ENCODE measurements at regions of chr22 and their contacts with region 1.

Region 1: DNA sequence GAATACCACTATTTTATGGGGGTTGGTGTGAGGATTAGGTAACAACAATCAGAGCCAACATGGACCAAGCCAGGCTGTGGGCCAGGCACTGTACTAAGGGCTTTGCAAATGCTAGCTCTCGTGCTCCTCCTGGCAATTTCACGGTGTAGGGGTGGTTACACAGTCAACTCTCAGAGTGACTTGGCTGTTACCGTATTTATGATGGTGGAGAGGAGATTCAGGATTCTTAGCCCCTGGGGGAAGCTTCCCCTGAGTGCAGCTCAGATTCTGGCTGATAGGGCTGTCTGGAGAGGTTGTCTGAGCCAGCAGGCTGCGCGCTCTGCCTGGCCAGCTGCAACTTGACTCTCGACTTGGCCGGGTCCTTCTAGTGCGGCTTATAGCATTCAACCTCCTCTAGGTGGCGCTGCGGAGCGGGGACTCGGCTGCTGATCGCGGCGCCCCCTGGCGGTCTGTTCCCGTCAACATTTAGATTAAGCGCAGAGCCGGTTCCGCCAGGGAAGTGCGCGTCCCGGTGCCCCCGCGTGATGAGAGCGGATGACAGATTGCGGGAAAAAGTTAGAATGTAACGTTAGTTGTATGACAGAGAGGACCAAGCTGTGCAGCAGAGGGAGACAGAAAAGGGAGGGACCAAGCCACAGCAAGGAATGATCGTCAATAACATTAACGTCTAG is 4.5 kb upstream of the NCF4 start:
- DNase-seq: peak; percentile 78 to 99
- H3K4me3 ChIP-seq: no peak overlapping the region
- H3K27ac ChIP-seq: no peak overlapping the region
- H3K4me1 ChIP-seq: peaks cover 0 to 3% (median under 1%) of the 10 kb centered on the region in 4 experiments; a peak in 2 of 7 replicates
- H3K27me3 ChIP-seq: peaks cover 1 to 16% (median 10%) of the 10 kb centered on the region in 4 experiments
- CTCF ChIP-seq: peak; percentile 97 to 100 (median 100)
- EP300 ChIP-seq: no peak
- POLR2A ChIP-seq: no peak
- RAD21 ChIP-seq: peak; percentile 81 to 91

Region 2: DNA sequence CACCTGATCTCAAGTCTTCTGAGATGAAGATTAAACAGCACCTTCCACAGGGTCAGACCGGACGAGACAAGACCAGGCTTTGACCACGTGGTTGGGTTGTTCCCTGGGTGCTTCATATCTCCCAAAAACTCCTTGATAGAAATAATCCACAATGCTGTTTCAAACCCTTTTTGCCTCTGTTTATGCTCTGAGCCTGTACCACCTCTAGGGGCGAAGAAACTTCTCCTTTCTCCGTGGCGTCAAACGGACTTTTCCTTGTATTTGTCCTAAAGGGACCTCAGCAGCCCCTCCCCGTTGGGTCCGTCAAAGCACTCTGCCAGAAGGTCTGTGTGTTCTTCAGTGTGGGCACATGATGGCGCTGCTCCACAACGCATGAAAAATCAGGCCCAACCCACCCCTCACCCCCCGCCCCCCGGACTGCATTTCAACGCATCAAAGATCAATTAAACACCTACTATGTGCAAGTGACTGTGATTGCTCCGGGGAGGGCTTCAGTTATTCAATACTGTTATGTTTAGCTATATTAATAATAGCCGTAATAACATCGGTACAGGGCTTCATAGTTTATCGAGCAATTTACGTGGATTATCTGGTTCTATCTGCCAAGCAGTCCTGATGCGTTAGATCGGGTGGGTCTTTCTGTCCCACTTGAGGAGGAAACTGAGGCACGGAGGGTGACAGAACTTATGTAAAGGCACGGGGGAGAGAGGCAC is 310.0 kb before region 1 on chr22:
- CTCF ChIA-PET with region 1: interaction called, 15 read pairs
- POLR2A ChIA-PET with region 1: no interaction called
- DNase-seq: peak; percentile 51 to 65
- H3K4me3 ChIP-seq: peak overlapping the region in 1 of 4 experiments; percentile 18; a peak in 2 of 8 replicates
- H3K27ac ChIP-seq: no peak overlapping the region
- H3K4me1 ChIP-seq: peaks cover 0 to 12% (median 3%) of the 10 kb centered on the region in 4 experiments; a peak in 4 of 7 replicates
- H3K27me3 ChIP-seq: no peaks in the 10 kb centered on the region; a peak in 2 of 7 replicates
- CTCF ChIP-seq: peak; percentile 78 to 89 (median 81)
- EP300 ChIP-seq: no peak
- POLR2A ChIP-seq: no peak
- RAD21 ChIP-seq: peak; percentile 89 to 90

Region 3: DNA sequence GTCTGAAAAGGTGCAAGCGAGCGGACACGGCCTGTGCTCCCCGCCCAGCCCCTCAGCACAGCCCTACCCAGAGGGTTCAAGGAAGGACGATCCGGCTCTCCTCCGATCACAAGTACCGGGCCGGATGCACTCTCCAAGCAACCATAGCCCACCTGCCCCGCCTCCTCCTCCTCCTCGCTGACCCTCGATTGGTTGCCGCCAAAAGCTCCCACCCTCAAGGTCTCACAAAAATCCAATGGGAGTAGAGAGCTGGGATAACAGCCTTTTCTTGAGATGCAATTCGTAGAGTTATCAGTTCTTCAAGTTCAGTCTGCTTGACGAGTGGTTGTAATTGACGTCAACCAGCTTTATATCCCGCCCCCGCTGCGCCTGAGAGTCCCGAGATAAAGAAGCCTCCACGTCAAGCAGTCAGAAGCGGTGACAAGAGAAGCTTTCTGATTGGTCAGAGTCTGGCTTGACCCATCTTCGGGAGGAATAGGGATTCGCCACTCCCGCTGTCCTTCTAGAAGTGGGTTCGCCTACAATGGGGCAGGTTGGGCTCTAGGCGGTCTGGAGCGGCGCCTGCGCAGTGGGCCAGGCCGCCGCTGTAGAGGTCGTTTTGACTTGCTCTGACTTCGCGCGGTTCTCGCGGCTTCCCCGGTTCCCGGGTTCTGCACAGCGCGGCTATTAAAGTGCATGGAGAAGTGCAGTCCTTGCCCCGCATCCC is 80.1 kb before region 1 on chr22 and contains the start of gene IFT27:
- CTCF ChIA-PET with region 1: interaction called, 62 read pairs
- POLR2A ChIA-PET with region 1: interaction called, 3 read pairs
- DNase-seq: peak; percentile 92 to 98
- H3K4me3 ChIP-seq: peak within 1 kb of the TSS; percentile 80 to 96 (median 85)
- H3K27ac ChIP-seq: no peak within 1 kb of the TSS
- H3K4me1 ChIP-seq: peaks cover 0 to 4% (median 4%) of the 10 kb centered on the region in 4 experiments; a peak in 6 of 7 replicates
- H3K27me3 ChIP-seq: peaks cover 0 to 10% (median 7%) of the 10 kb centered on the region in 4 experiments; a peak in 4 of 7 replicates
- CTCF ChIP-seq: no peak
- EP300 ChIP-seq: no peak
- POLR2A ChIP-seq: peak in 1 of 2 experiments; percentile 59; a peak in 1 of 3 replicates
- RAD21 ChIP-seq: no peak
- total RNA-seq, gene IFT27: 44.0 and 46.2 TPM in 2 replicates

Region 4: DNA sequence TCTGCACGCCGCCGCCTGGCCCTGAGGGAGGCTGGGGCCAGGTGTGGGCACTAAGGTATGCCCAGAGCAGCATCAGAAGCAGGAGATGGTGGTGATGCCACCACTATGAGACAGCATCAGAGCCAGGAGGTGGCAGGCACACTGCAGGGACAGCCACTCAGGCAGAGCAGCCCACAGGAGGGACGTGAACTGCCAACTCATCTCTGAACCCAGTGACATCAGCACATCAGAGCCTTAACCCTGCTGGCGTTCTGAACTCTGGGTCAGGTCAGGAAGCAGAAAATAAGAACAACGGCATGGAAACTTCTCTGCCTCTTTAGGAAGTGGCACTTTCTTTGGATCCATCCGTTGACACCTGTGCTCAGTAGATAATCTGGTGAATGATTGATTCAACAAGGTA is 65.6 kb before region 1 on chr22:
- CTCF ChIA-PET with region 1: interaction called, 62 read pairs
- POLR2A ChIA-PET with region 1: no interaction called
- DNase-seq: no peak
- H3K4me3 ChIP-seq: no peak overlapping the region
- H3K27ac ChIP-seq: no peak overlapping the region
- H3K4me1 ChIP-seq: peaks cover 0 to 3% (median under 1%) of the 10 kb centered on the region in 4 experiments; a peak in 1 of 7 replicates
- H3K27me3 ChIP-seq: no peaks in the 10 kb centered on the region
- CTCF ChIP-seq: no peak
- EP300 ChIP-seq: no peak
- POLR2A ChIP-seq: no peak
- RAD21 ChIP-seq: no peak

Region 5: GRCh38 chr22:36816636-36817524 is 39.4 kb before region 1 on chr22 and contains the start of gene PVALB:
- CTCF ChIA-PET with region 1: interaction called, 16 read pairs
- POLR2A ChIA-PET with region 1: no interaction called
- DNase-seq: peak in 1 of 2 experiments; percentile 65
- H3K4me3 ChIP-seq: peak within 1 kb of the TSS; percentile 39 to 69 (median 59)
- H3K27ac ChIP-seq: no peak within 1 kb of the TSS
- H3K4me1 ChIP-seq: peaks cover 0 to 14% (median 9%) of the 10 kb centered on the region in 4 experiments; a peak in 6 of 7 replicates
- H3K27me3 ChIP-seq: peaks cover 21 to 53% (median 40%) of the 10 kb centered on the region in 4 experiments
- CTCF ChIP-seq: no peak
- EP300 ChIP-seq: no peak
- POLR2A ChIP-seq: no peak
- RAD21 ChIP-seq: no peak
- total RNA-seq, gene PVALB: 1.7 and 3.2 TPM in 2 replicates

Region 6: GRCh38 chr22:36912694-36913426 is 56.6 kb after region 1 on chr22:
- CTCF ChIA-PET with region 1: no interaction called
- POLR2A ChIA-PET with region 1: no interaction called
- DNase-seq: no peak
- H3K4me3 ChIP-seq: peak overlapping the region in 1 of 4 experiments; percentile 32; a peak in 2 of 8 replicates
- H3K27ac ChIP-seq: no peak overlapping the region
- H3K4me1 ChIP-seq: peaks cover 4 to 13% (median 8%) of the 10 kb centered on the region in 4 experiments
- H3K27me3 ChIP-seq: peaks cover 10 to 48% (median 29%) of the 10 kb centered on the region in 4 experiments
- CTCF ChIP-seq: no peak
- EP300 ChIP-seq: no peak
- POLR2A ChIP-seq: no peak
- RAD21 ChIP-seq: no peak

Region 7: GRCh38 chr22:36966851-36967540 is 110.7 kb after region 1 on chr22:
- CTCF ChIA-PET with region 1: interaction called, 12 read pairs
- POLR2A ChIA-PET with region 1: no interaction called
- DNase-seq: no peak
- H3K4me3 ChIP-seq: no peak overlapping the region
- H3K27ac ChIP-seq: no peak overlapping the region
- H3K4me1 ChIP-seq: no peaks in the 10 kb centered on the region
- H3K27me3 ChIP-seq: no peaks in the 10 kb centered on the region; a peak in 1 of 7 replicates
- CTCF ChIP-seq: no peak
- EP300 ChIP-seq: no peak
- POLR2A ChIP-seq: no peak
- RAD21 ChIP-seq: no peak

Region 8: DNA sequence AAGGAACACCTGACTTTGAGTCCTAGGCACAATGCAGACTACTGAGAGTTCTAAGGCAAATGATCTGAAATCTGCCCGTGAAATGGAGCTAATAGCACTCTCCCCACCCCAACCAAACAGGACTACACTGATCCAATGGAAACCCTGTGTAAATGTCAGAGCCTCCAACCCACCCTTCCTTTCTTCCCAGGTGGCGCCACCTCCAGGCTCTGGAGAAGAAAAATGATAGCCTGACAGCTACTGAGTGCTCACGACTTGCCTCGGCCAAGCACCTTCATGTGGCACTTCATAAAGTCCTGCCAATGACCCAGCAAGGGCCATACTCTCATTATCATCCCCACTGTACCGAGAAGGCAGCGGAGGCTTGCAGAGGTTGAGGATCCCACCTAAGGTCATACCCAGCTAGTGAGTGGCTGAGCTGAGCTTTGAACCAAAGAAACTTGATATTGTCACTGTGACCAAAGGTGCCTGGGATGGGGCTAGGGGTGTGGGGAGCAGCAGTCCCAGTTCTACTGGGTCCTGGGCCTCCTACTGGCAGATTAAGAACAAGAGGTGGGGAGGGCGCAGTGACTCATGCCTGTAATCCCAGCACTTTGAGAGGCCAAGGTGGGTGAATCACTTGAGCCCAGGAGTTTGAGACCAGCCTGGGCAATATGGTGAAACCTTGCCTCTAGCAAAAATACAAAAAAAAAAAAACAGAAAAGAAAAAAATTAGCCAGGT is 142.5 kb after region 1 on chr22:
- CTCF ChIA-PET with region 1: interaction called, 12 read pairs
- POLR2A ChIA-PET with region 1: no interaction called
- DNase-seq: no peak
- H3K4me3 ChIP-seq: no peak overlapping the region
- H3K27ac ChIP-seq: no peak overlapping the region
- H3K4me1 ChIP-seq: peaks cover 0 to 7% (median 2%) of the 10 kb centered on the region in 4 experiments; a peak in 6 of 7 replicates
- H3K27me3 ChIP-seq: 0 out of 7 replicates have a peak, but pooled peaks cover 0 to 3% (median 0%) of the 10 kb centered on the region in 4 experiments
- CTCF ChIP-seq: peak; percentile 47 to 57 (median 54)
- EP300 ChIP-seq: no peak
- POLR2A ChIP-seq: no peak
- RAD21 ChIP-seq: peak; percentile 34 to 48; a peak in 3 of 4 replicates

Measured in H1 (cell line).